Activated CD4-positive, alpha-beta T cell treated with anti-CD3 and anti-CD28 coated beads, Interleukin-2, amount 10 ng/mL, durations not matched to agents 7 days and 5 days (primary cell): ENCODE measurements at regions of chr7 and their contacts with region 1.

Region 1: GRCh38 chr7:7418997-7419714 is 116.5 kb downstream of the COL28A1 start:
- DNase-seq: no peak
- H3K4me3 Mint-ChIP-seq: no peak overlapping the region
- H3K27ac Mint-ChIP-seq: no peak overlapping the region
- H3K4me1 Mint-ChIP-seq: peaks cover 11% of the 10 kb centered on the region
- H3K27me3 Mint-ChIP-seq: no peaks in the 10 kb centered on the region

Region 2: GRCh38 chr7:7489546-7489945 is 70.4 kb after region 1 on chr7:
- CTCF ChIA-PET with region 1: no interaction called
- POLR2A ChIA-PET with region 1: no interaction called
- DNase-seq: no peak
- H3K4me3 Mint-ChIP-seq: no peak overlapping the region
- H3K27ac Mint-ChIP-seq: no peak overlapping the region
- H3K4me1 Mint-ChIP-seq: no peaks in the 10 kb centered on the region
- H3K27me3 Mint-ChIP-seq: peaks cover 2% of the 10 kb centered on the region

Region 3: GRCh38 chr7:7607010-7607409 is 187.9 kb after region 1 on chr7:
- CTCF ChIA-PET with region 1: no interaction called
- POLR2A ChIA-PET with region 1: interaction called, 12 read pairs
- DNase-seq: no peak
- H3K4me3 Mint-ChIP-seq: no peak overlapping the region
- H3K27ac Mint-ChIP-seq: no peak overlapping the region
- H3K4me1 Mint-ChIP-seq: no peaks in the 10 kb centered on the region
- H3K27me3 Mint-ChIP-seq: no peaks in the 10 kb centered on the region

Region 4: DNA sequence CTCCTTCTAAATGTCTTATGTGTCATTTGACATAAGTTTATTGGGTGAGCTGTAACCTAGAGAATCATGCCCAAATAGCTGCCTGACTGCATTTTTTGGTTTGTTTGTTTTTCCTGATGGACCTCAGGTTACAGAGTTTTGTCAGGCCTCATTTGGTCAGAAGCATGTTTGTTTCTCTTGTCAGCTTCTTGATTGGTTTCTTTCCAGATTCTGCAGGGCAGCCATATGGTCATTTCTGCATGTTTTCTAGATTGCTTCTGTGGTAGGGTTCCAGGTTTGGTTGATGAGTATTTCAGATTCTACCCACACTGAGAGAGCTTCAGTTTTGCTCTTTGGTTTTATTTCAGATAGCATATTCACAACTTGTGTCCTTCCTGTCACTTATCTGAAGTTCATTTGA is 577.4 kb after region 1 on chr7:
- CTCF ChIA-PET with region 1: no interaction called
- POLR2A ChIA-PET with region 1: no interaction called
- DNase-seq: no peak
- H3K4me3 Mint-ChIP-seq: no peak overlapping the region
- H3K27ac Mint-ChIP-seq: no peak overlapping the region
- H3K4me1 Mint-ChIP-seq: peaks cover 8% of the 10 kb centered on the region
- H3K27me3 Mint-ChIP-seq: no peaks in the 10 kb centered on the region